B cell (primary cell): ENCODE measurements at regions of chr2 and their contacts with region 1.

Region 1: GRCh38 chr2:218395797-218396687 is 3.6 kb upstream of the CTDSP1 start:
- DNase-seq: peak; percentile 98
- ATAC-seq: peak; percentile 69
- H3K4me3 ChIP-seq: peak overlapping the region; percentile 75 to 94 (median 89)
- H3K4me3 Mint-ChIP-seq: peak overlapping the region; percentile 96
- H3K27ac ChIP-seq: peak overlapping the region; percentile 88 to 89
- H3K27ac Mint-ChIP-seq: peak overlapping the region; percentile 99
- H3K4me1 ChIP-seq: peaks cover 35 to 61% of the 10 kb centered on the region in 2 donors
- H3K4me1 Mint-ChIP-seq: peaks cover 53% of the 10 kb centered on the region
- H3K27me3 ChIP-seq: no peaks in the 10 kb centered on the region
- H3K27me3 Mint-ChIP-seq: no peaks in the 10 kb centered on the region
- CTCF ChIP-seq: peak; percentile 83

Region 2: GRCh38 chr2:218186355-218186766 is 209.7 kb before region 1 on chr2:
- CTCF ChIA-PET with region 1: interaction called, 3 read pairs
- POLR2A ChIA-PET with region 1: no interaction called
- intact Hi-C with region 1: loop called (anchors 1 kb)
- DNase-seq: peak; percentile 82
- ATAC-seq: peak; percentile 91
- H3K4me3 ChIP-seq: no peak overlapping the region
- H3K4me3 Mint-ChIP-seq: no peak overlapping the region
- H3K27ac ChIP-seq: no peak overlapping the region
- H3K27ac Mint-ChIP-seq: peak overlapping the region; percentile 26
- H3K4me1 ChIP-seq: peaks cover 2 to 7% of the 10 kb centered on the region in 2 donors
- H3K4me1 Mint-ChIP-seq: peaks cover 6% of the 10 kb centered on the region
- H3K27me3 ChIP-seq: peaks cover 0 to 8% (median 2%) of the 10 kb centered on the region in 4 experiments
- H3K27me3 Mint-ChIP-seq: peaks cover 7% of the 10 kb centered on the region
- CTCF ChIP-seq: peak; percentile 88

Region 3: GRCh38 chr2:218286570-218287459 is 109.2 kb before region 1 on chr2:
- CTCF ChIA-PET with region 1: interaction called, 28 read pairs
- POLR2A ChIA-PET with region 1: interaction called, 16 read pairs
- intact Hi-C with region 1: loop called (anchors 1 kb)
- DNase-seq: peak; percentile 94
- ATAC-seq: peak; percentile 56
- H3K4me3 ChIP-seq: peak overlapping the region; percentile 26 to 64 (median 54)
- H3K4me3 Mint-ChIP-seq: peak overlapping the region; percentile 86
- H3K27ac ChIP-seq: peak overlapping the region; percentile 97 to 99
- H3K27ac Mint-ChIP-seq: peak overlapping the region; percentile 96
- H3K4me1 ChIP-seq: peaks cover 79 to 98% of the 10 kb centered on the region in 2 donors
- H3K4me1 Mint-ChIP-seq: peaks cover 86% of the 10 kb centered on the region
- H3K27me3 ChIP-seq: no peaks in the 10 kb centered on the region
- H3K27me3 Mint-ChIP-seq: no peaks in the 10 kb centered on the region
- CTCF ChIP-seq: no peak

Region 4: GRCh38 chr2:218301176-218301819 is 94.7 kb before region 1 on chr2:
- CTCF ChIA-PET with region 1: interaction called, 42 read pairs
- POLR2A ChIA-PET with region 1: no interaction called
- intact Hi-C with region 1: loop called (anchors 1 kb)
- DNase-seq: peak; percentile 90
- ATAC-seq: peak; percentile 94
- H3K4me3 ChIP-seq: no peak overlapping the region
- H3K4me3 Mint-ChIP-seq: no peak overlapping the region
- H3K27ac ChIP-seq: no peak overlapping the region
- H3K27ac Mint-ChIP-seq: no peak overlapping the region
- H3K4me1 ChIP-seq: peaks cover 3 to 6% of the 10 kb centered on the region in 2 donors
- H3K4me1 Mint-ChIP-seq: peaks cover 7% of the 10 kb centered on the region
- H3K27me3 ChIP-seq: no peaks in the 10 kb centered on the region
- H3K27me3 Mint-ChIP-seq: no peaks in the 10 kb centered on the region
- CTCF ChIP-seq: peak; percentile 90

Region 5: GRCh38 chr2:218360447-218360846 is 35.6 kb before region 1 on chr2:
- CTCF ChIA-PET with region 1: interaction called, 17 read pairs
- POLR2A ChIA-PET with region 1: interaction called, 3 read pairs
- intact Hi-C with region 1: loop called (anchors 5 kb)
- DNase-seq: no peak
- ATAC-seq: no peak
- H3K4me3 ChIP-seq: no peak overlapping the region
- H3K4me3 Mint-ChIP-seq: no peak overlapping the region
- H3K27ac ChIP-seq: no peak overlapping the region
- H3K27ac Mint-ChIP-seq: no peak overlapping the region
- H3K4me1 ChIP-seq: peaks cover 0 to 7% of the 10 kb centered on the region in 2 donors
- H3K4me1 Mint-ChIP-seq: peaks cover 4% of the 10 kb centered on the region
- H3K27me3 ChIP-seq: no peaks in the 10 kb centered on the region
- H3K27me3 Mint-ChIP-seq: no peaks in the 10 kb centered on the region
- CTCF ChIP-seq: no peak

Region 6: DNA sequence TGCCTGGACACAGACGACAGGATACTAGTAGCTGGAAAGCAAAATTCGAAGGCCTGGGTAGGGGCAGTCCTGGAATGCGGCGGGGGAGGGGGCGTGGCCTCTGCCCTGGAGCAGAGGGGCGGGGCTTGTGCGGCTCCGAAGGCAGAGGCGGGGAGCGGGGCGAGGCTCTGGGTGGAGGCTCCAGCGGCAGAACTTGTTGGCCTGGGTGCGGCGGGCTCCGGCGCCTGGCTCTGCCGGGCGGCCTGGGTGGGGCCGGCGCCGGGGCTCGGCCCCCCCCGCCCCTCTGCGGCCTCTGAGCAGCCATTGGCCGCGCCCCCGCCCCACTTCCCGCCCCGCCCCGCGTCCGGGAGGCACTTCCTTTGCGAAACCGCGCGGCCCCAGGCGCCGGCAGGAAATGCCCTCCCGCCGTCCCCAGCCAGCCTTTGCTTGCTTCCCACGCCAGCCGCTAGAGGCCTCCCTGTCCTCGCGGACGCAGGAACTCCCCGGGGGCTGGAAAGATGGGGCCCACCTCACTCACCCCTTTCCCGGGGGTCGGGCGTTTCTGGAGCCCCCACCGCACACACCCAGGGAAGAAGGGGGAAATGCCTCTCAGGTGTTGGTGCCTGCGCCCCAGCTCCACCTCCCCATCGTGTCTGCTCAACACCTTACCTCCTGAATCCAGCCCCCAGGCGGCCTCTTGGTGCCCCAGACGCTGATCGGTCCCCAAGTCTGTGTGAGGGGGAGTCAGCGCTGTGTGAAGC is 10.3 kb after region 1 on chr2:
- CTCF ChIA-PET with region 1: interaction called, 9 read pairs
- POLR2A ChIA-PET with region 1: interaction called, 5 read pairs
- intact Hi-C with region 1: loop called (anchors 1 kb)
- DNase-seq: peak; percentile 93
- ATAC-seq: peak; percentile 81
- H3K4me3 ChIP-seq: peak overlapping the region; percentile 15 to 72 (median 53)
- H3K4me3 Mint-ChIP-seq: peak overlapping the region; percentile 88
- H3K27ac ChIP-seq: peak overlapping the region; percentile 62 to 82
- H3K27ac Mint-ChIP-seq: peak overlapping the region; percentile 90
- H3K4me1 ChIP-seq: peaks cover 30 to 48% of the 10 kb centered on the region in 2 donors
- H3K4me1 Mint-ChIP-seq: peaks cover 47% of the 10 kb centered on the region
- H3K27me3 ChIP-seq: no peaks in the 10 kb centered on the region
- H3K27me3 Mint-ChIP-seq: no peaks in the 10 kb centered on the region
- CTCF ChIP-seq: peak; percentile 69

Region 7: GRCh38 chr2:218876562-218877219 is 480.6 kb after region 1 on chr2:
- CTCF ChIA-PET with region 1: no interaction called
- POLR2A ChIA-PET with region 1: no interaction called
- intact Hi-C with region 1: loop called (anchors 5 kb)
- DNase-seq: peak; percentile 87
- ATAC-seq: no peak
- H3K4me3 ChIP-seq: no peak overlapping the region
- H3K4me3 Mint-ChIP-seq: peak overlapping the region; percentile 2
- H3K27ac ChIP-seq: no peak overlapping the region
- H3K27ac Mint-ChIP-seq: peak overlapping the region; percentile 23
- H3K4me1 ChIP-seq: peaks cover 54 to 70% of the 10 kb centered on the region in 2 donors
- H3K4me1 Mint-ChIP-seq: peaks cover 59% of the 10 kb centered on the region
- H3K27me3 ChIP-seq: peaks cover 0 to 40% (median 17%) of the 10 kb centered on the region in 4 experiments
- H3K27me3 Mint-ChIP-seq: peaks cover 19% of the 10 kb centered on the region
- CTCF ChIP-seq: peak; percentile 94